RWPE1 (cell line): ENCODE measurements at regions of chr5 and their contacts with region 1.

Region 1: DNA sequence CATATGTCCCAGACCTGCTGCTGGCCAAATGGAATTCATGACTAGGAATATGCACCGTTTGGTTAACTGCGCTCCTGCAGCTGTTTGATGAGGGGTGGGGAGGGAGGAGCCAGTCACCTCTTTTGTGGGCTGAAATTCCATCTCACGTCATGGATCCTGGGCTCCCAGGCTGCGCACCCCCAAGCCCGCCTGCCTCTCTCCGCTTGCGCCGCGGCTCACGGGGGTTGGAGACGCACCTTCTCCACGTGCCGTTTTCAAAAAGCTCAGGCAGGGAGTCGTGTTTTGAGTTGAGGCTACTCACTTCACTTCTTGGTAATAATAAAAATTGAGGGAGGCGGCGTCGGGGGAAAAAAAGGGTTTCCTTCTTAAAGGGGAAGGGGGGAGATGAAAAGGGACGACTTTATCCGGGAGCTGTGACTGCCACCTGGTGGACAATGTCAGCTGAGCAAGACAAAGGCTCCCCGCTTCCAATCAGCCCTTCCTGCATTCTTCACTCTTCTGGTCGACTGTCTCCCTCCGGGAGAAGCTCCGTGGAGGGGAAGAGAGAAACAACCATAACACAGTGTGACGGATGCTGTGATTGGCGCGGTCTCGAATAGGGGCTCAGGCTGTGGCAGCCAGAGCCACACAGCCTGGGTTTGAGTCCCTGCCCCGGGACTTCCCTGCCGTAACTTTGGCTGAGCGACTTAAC is 15.9 kb upstream of the C5orf47 start:
- DNase-seq: peak; percentile 90
- H3K27ac ChIP-seq: no peak overlapping the region
- CTCF ChIP-seq: peak; percentile 91

Region 2: DNA sequence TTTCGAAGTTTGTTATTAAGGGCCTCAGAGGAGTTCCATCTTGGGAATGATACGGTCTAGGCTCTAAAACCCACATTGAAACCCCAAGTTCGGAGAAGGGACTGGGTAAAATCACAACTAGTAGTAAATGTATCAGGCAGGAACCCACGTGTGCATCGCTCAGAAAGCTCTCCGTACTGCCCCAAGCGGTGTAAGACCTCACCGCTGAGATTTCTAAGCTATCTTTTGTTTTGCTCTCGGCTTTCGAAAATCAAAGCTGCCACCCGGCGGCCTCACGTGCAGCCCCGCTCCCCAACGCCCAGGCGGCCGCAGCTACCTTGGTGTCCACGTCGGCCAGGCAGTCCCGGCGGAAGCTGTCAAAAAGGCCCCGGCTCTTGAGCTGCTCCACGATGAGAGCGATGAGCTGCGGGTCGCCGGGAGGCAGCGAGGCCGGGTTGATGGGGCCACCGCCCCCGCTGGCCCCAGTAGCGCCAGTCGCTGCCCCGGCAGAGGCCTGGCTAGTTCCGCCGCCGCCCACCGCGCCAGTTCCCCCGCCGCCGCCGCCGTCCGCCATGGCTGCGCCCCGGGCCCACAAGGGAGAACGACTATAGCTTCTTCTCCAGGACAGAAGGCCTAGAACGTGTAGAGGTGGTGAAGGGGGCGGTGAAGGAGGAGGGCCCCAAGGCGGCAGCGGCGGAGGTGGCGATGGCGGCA is 357.0 kb before region 1 on chr5:
- CTCF ChIA-PET with region 1: interaction called, 50 read pairs
- POLR2A ChIA-PET with region 1: no interaction called
- DNase-seq: peak; percentile 86
- H3K27ac ChIP-seq: peak overlapping the region; percentile 81
- CTCF ChIP-seq: peak; percentile 86

Region 3: GRCh38 chr5:173623296-173623771 is 349.7 kb before region 1 on chr5:
- CTCF ChIA-PET with region 1: interaction called, 50 read pairs
- POLR2A ChIA-PET with region 1: no interaction called
- DNase-seq: peak; percentile 46
- H3K27ac ChIP-seq: no peak overlapping the region
- CTCF ChIP-seq: no peak

Region 4: DNA sequence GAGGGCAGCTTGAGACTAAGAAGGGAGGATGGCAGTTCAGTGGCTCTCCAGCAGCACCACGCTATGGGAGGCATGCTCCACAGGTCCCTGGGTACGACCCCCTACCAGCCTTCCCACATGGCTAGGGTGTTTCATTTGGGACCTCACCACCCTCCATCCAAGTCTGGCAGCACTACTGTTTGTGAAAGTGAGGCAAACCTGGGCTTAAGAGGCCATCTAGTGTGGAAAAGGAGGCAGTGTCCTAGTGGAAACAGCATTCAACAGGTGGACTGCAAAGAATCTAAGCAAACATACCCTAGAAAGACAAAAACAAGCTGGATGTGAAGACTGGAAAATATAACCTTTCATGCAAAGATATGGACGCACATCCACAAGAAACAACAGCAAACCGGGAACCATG is 11.1 kb after region 1 on chr5:
- CTCF ChIA-PET with region 1: interaction called, 11 read pairs
- POLR2A ChIA-PET with region 1: no interaction called
- DNase-seq: no peak
- H3K27ac ChIP-seq: no peak overlapping the region
- CTCF ChIP-seq: no peak